Dendritic cell treated with granulocyte-macrophage colony-stimulating factor and Interleukin-4, amounts not matched to agents 40 ng/mL and 50 ng/mL, for 4 days (primary cell): ENCODE measurements at regions of chr19 and their contacts with region 1.

Region 1: DNA sequence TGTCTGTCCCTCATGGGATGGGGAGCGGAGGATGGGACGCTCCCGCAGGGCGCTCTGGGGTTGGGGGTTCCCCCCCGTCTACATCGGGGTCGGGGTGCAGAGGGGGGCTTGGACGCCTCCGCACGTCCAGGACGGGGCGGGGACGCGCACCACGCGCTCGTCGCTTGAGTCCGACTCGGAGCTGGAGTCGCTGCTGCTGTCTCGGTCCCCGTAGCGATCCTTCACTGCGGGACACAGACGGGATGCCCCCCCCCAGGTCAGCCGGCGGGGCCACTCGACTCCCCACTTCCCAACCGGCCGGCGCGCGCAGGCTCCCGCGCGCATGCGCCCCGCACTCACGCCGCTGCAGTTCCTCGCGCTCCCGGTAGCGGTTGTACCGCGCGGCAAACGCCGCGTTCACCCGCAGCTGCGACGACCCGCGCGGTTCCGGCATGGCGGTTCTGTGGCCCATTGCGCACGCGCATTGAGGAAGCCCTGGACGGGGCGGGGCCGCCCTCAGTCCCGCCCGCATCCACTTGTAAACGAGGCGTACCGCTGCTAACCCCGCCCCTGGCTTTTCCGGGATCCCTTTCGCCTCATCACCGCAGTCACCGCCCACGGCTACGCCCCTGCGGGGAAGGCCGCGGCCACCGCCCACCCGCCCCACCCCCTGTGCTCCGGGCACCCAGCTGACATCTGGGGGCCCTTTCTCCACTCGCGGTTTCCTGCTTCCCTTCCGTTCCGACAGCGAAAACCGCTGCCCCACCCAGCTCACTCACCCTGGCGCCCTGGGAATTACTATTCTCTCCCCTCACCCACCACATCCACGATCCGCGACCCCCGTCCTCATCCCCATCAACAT is at the start of gene KRI1:
- H3K4me3 Mint-ChIP-seq: peak within 1 kb of the TSS; percentile 92
- H3K27ac Mint-ChIP-seq: peak within 1 kb of the TSS; percentile 88
- H3K4me1 Mint-ChIP-seq: peaks cover 50% of the 10 kb centered on the region
- H3K27me3 Mint-ChIP-seq: no peaks in the 10 kb centered on the region

Region 2: GRCh38 chr19:10502524-10503001 is 63.2 kb before region 1 on chr19:
- intact Hi-C with region 1: loop called (anchors 2 kb)
- H3K4me3 Mint-ChIP-seq: peak overlapping the region; percentile 84
- H3K27ac Mint-ChIP-seq: peak overlapping the region; percentile 94
- H3K4me1 Mint-ChIP-seq: peaks cover 47% of the 10 kb centered on the region
- H3K27me3 Mint-ChIP-seq: no peaks in the 10 kb centered on the region

Region 3: GRCh38 chr19:10543420-10544241 is 22.2 kb before region 1 on chr19 and contains the start of gene ATG4D:
- intact Hi-C with region 1: no loop called
- H3K4me3 Mint-ChIP-seq: peak within 1 kb of the TSS; percentile 83
- H3K27ac Mint-ChIP-seq: peak within 1 kb of the TSS; percentile 75
- H3K4me1 Mint-ChIP-seq: peaks cover 33% of the 10 kb centered on the region
- H3K27me3 Mint-ChIP-seq: peaks cover 10% of the 10 kb centered on the region

Region 4: GRCh38 chr19:10602330-10603083 is 36.7 kb after region 1 on chr19:
- intact Hi-C with region 1: no loop called
- H3K4me3 Mint-ChIP-seq: peak overlapping the region; percentile 78
- H3K27ac Mint-ChIP-seq: peak overlapping the region; percentile 44
- H3K4me1 Mint-ChIP-seq: peaks cover 25% of the 10 kb centered on the region
- H3K27me3 Mint-ChIP-seq: peaks cover 12% of the 10 kb centered on the region

Region 5: DNA sequence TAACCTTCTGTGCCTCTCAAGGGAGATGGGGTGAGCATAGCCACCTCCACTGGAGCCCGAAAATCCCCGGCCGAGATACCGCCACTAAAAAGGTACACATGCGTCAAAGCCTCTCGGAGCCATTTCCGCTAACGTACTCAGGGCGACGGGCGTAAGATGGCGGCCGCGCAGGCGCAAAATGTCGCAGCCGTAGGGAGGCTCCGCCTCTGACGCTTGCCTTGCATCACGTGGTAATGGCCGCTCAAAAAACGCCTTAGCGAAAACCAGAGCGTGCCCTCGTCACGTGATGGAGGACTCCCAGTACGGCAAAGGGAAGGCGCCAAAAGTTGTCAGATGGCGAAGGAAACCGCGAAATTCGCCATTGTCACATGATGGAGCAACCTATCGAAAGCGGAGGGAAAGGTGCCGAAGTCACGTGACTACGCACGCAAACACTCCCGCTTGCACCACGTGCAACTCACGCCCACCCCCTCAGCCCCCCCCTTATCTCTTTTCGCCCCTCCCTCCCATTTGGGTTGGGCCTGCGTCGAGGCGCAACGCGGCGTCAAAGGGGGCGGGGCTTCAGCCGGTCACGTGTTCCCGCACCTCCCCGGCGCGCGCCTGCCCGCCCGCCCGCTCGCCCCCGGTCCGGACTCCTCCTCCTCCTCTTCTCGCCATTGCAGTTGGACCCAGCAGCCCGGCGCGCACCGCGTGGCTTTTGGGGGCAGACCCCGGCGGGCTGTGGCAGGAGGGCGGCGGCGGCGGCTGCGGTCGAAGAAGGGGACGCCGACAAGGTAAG is 88.1 kb after region 1 on chr19 and contains the start of gene ILF3:
- intact Hi-C with region 1: loop called (anchors 1 kb)
- H3K4me3 Mint-ChIP-seq: peak within 1 kb of the TSS; percentile 86
- H3K27ac Mint-ChIP-seq: peak within 1 kb of the TSS; percentile 97
- H3K4me1 Mint-ChIP-seq: peaks cover 35% of the 10 kb centered on the region
- H3K27me3 Mint-ChIP-seq: no peaks in the 10 kb centered on the region